K562 (cell line): ENCODE measurements at regions of chr15 and their contacts with region 1.

Region 1: GRCh38 chr15:43824302-43825246 is at the start of gene MFAP1:
- DNase-seq: peak; percentile 92 to 99 (median 94)
- ATAC-seq: peak; percentile 79
- H3K4me3 ChIP-seq: peak within 1 kb of the TSS; percentile 58
- H3K27ac ChIP-seq: peak within 1 kb of the TSS; percentile 88
- H3K4me1 ChIP-seq: peaks cover 17 to 27% of the 10 kb centered on the region in 2 experiments; a peak in 4 of 5 replicates
- H3K27me3 ChIP-seq: no peaks in the 10 kb centered on the region
- CTCF ChIP-seq: no peak
- EP300 ChIP-seq: peak; percentile 17; the same call in 1 of the 2 replicates
- POLR2A ChIP-seq: peak; percentile 97
- RAD21 ChIP-seq: no peak
- polyA plus RNA-seq, gene MFAP1: 34.9 to 64.0 TPM

Region 2: DNA sequence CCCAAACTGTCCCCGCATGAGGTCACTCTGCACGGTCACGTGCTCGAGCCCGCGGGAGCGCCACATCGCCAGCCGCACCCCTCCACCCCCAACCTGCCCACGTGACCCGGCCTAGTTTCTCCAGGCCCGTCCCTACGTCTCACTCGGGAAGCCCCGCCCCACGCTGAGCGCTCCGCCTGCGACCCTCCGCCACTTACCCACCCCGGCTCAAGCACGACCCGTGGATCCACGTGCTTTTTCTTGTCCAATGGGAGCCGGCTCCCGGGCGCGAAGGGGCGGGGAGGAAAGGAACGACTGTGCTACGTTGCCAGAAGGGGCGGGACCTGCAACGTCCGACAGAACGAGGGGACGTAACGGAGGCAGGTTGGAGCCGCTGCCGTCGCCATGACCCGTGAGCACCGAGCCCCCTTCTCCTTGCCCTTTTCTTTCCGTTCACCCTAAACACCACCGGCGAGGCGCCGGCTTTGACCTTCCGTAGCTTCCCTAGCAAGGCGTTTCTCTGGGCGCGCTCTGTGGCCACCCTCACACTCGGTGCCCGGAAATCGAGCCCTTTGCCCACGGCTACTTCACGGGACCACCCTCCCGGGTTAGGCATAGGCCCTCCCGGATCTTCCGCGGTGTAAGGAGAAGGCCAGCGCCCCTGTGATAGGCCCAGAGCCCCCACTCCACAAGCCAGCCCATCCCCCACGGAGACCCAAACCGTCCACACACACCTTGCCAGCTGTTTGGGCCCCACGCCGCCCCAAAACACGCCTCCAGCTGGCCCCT is 32.4 kb before region 1 on chr15 and contains the start of gene SERF2:
- CTCF ChIA-PET with region 1: no interaction called
- POLR2A ChIA-PET with region 1: interaction called, 26 read pairs
- in situ Hi-C with region 1: no loop called
- intact Hi-C with region 1: no loop called
- DNase-seq: peak; percentile 98 to 100 (median 98)
- ATAC-seq: peak; percentile 95
- H3K4me3 ChIP-seq: peak within 1 kb of the TSS; percentile 95
- H3K27ac ChIP-seq: peak within 1 kb of the TSS; percentile 99
- H3K4me1 ChIP-seq: peaks cover 26 to 35% of the 10 kb centered on the region in 2 experiments
- H3K27me3 ChIP-seq: no peaks in the 10 kb centered on the region
- CTCF ChIP-seq: no peak
- EP300 ChIP-seq: 0 out of 2 replicates have a peak, but pooled peaks have one; percentile 25
- POLR2A ChIP-seq: peak; percentile 98
- RAD21 ChIP-seq: no peak
- polyA plus RNA-seq, gene SERF2: 2,726 to 3,360 TPM

Region 3: GRCh38 chr15:43800286-43801141 is 24.1 kb before region 1 on chr15 and contains the start of gene HYPK:
- CTCF ChIA-PET with region 1: no interaction called
- POLR2A ChIA-PET with region 1: interaction called, 28 read pairs
- in situ Hi-C with region 1: no loop called
- intact Hi-C with region 1: no loop called
- DNase-seq: peak; percentile 85 to 95 (median 88)
- ATAC-seq: peak; percentile 94
- H3K4me3 ChIP-seq: peak within 1 kb of the TSS; percentile 78
- H3K27ac ChIP-seq: peak within 1 kb of the TSS; percentile 81
- H3K4me1 ChIP-seq: peaks cover 19 to 24% of the 10 kb centered on the region in 2 experiments
- H3K27me3 ChIP-seq: no peaks in the 10 kb centered on the region
- CTCF ChIP-seq: no peak
- EP300 ChIP-seq: no peak
- POLR2A ChIP-seq: peak; percentile 97
- RAD21 ChIP-seq: no peak
- polyA plus RNA-seq, gene HYPK: 9.6 TPM

Region 4: GRCh38 chr15:43808960-43809678 is 15.5 kb before region 1 on chr15:
- CTCF ChIA-PET with region 1: no interaction called
- POLR2A ChIA-PET with region 1: interaction called, 14 read pairs
- in situ Hi-C with region 1: no loop called
- intact Hi-C with region 1: no loop called
- DNase-seq: no peak
- ATAC-seq: no peak
- H3K4me3 ChIP-seq: no peak overlapping the region
- H3K27ac ChIP-seq: no peak overlapping the region
- H3K4me1 ChIP-seq: peaks cover 0 to 8% of the 10 kb centered on the region in 2 experiments; a peak in 2 of 5 replicates
- H3K27me3 ChIP-seq: no peaks in the 10 kb centered on the region
- CTCF ChIP-seq: no peak
- EP300 ChIP-seq: no peak
- POLR2A ChIP-seq: no peak
- RAD21 ChIP-seq: no peak